Endothelial cell of umbilical vein (primary cell): ENCODE measurements at regions of chr11 and their contacts with region 1.

Region 1: GRCh38 chr11:124837491-124837856 is 27.8 kb upstream of the ROBO3 start:
- DNase-seq: peak; percentile 87
- H3K4me3 ChIP-seq: no peak overlapping the region
- H3K27ac ChIP-seq: no peak overlapping the region
- H3K4me1 ChIP-seq: peaks cover 10% of the 10 kb centered on the region
- H3K27me3 ChIP-seq: peaks cover 37 to 53% of the 10 kb centered on the region in 2 experiments
- CTCF ChIP-seq: peak; percentile 55 to 69
- POLR2A ChIP-seq: no peak

Region 2: DNA sequence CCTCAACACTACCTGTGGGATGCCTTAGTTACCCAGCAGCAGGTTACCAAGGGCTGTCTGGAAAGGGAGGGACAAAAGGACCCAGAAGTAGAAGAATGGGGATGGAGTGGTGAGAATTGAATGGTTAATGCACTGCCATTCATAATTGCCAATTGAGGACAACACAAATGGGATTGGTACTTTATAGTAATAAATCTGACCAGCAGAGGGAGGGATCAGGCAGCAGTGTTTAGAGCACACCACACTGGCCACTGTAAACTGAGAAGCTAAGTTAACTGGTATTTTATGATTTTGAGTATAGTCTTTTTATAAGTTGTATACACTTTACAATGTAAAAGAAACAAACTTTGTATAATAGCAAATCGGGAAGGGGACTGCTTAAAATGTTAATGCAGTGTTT is 204.1 kb before region 1 on chr11:
- CTCF ChIA-PET with region 1: interaction called, 17 read pairs
- POLR2A ChIA-PET with region 1: no interaction called
- dilution Hi-C with region 1: no loop called
- intact Hi-C with region 1: no loop called
- DNase-seq: peak; percentile 26
- H3K4me3 ChIP-seq: no peak overlapping the region
- H3K27ac ChIP-seq: no peak overlapping the region
- H3K4me1 ChIP-seq: no peaks in the 10 kb centered on the region
- H3K27me3 ChIP-seq: no peaks in the 10 kb centered on the region
- CTCF ChIP-seq: peak; percentile 26 to 36
- POLR2A ChIP-seq: no peak

Region 3: GRCh38 chr11:124673333-124674167 is 163.9 kb before region 1 on chr11 and contains the starts of genes SIAE and SPA17:
- CTCF ChIA-PET with region 1: interaction called, 105 read pairs
- POLR2A ChIA-PET with region 1: interaction called, 5 read pairs
- dilution Hi-C with region 1: loop called (anchors 10 kb)
- intact Hi-C with region 1: loop called (anchors 1 kb)
- DNase-seq: peak; percentile 97
- H3K4me3 ChIP-seq: peak within 1 kb of the TSS; percentile 65 to 95 (median 65)
- H3K27ac ChIP-seq: peak within 1 kb of the TSS; percentile 63
- H3K4me1 ChIP-seq: peaks cover 26% of the 10 kb centered on the region
- H3K27me3 ChIP-seq: no peaks in the 10 kb centered on the region
- CTCF ChIP-seq: no peak
- POLR2A ChIP-seq: peak; percentile 96
- total RNA-seq, gene SIAE: 15.1 and 16.9 TPM in 2 replicates
- total RNA-seq, gene SPA17: 4.7 and 6.1 TPM in 2 replicates

Region 4: GRCh38 chr11:124753205-124753604 is 84.3 kb before region 1 on chr11:
- CTCF ChIA-PET with region 1: interaction called, 33 read pairs
- POLR2A ChIA-PET with region 1: interaction called, 3 read pairs
- dilution Hi-C with region 1: no loop called
- intact Hi-C with region 1: no loop called
- DNase-seq: no peak
- H3K4me3 ChIP-seq: no peak overlapping the region
- H3K27ac ChIP-seq: peak overlapping the region; percentile 28
- H3K4me1 ChIP-seq: peaks cover 77% of the 10 kb centered on the region
- H3K27me3 ChIP-seq: no peaks in the 10 kb centered on the region
- CTCF ChIP-seq: no peak
- POLR2A ChIP-seq: no peak

Region 5: DNA sequence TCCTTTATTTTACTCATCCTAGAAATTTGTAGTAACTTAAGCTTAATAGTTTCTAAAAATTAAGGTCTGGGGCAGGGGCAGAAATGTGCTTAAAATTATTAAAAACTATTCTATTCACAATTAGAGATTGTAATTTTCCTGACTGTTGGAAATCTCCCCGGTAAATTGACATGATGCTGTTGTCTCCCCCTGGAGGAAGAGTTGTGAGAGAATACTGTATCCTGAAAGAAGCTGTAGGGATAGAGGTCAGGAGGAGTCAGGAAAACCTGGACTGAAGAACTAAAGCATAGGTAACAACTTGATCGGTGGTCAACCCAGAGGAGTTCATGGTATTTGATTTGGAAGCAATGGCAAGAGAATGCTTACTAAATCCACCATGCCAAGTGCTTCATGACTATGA is 59.2 kb before region 1 on chr11:
- CTCF ChIA-PET with region 1: interaction called, 27 read pairs
- POLR2A ChIA-PET with region 1: no interaction called
- dilution Hi-C with region 1: no loop called
- intact Hi-C with region 1: no loop called
- DNase-seq: no peak
- H3K4me3 ChIP-seq: no peak overlapping the region
- H3K27ac ChIP-seq: no peak overlapping the region
- H3K4me1 ChIP-seq: no peaks in the 10 kb centered on the region
- H3K27me3 ChIP-seq: no peaks in the 10 kb centered on the region
- CTCF ChIP-seq: peak in 1 of 2 donors; percentile 26
- POLR2A ChIP-seq: no peak

Region 6: GRCh38 chr11:124855437-124855836 is 18.0 kb after region 1 on chr11:
- CTCF ChIA-PET with region 1: interaction called, 16 read pairs
- POLR2A ChIA-PET with region 1: no interaction called
- dilution Hi-C with region 1: no loop called
- intact Hi-C with region 1: no loop called
- DNase-seq: no peak
- H3K4me3 ChIP-seq: no peak overlapping the region
- H3K27ac ChIP-seq: no peak overlapping the region
- H3K4me1 ChIP-seq: no peaks in the 10 kb centered on the region
- H3K27me3 ChIP-seq: peaks cover 31 to 69% of the 10 kb centered on the region in 2 experiments
- CTCF ChIP-seq: no peak
- POLR2A ChIP-seq: no peak

Region 7: DNA sequence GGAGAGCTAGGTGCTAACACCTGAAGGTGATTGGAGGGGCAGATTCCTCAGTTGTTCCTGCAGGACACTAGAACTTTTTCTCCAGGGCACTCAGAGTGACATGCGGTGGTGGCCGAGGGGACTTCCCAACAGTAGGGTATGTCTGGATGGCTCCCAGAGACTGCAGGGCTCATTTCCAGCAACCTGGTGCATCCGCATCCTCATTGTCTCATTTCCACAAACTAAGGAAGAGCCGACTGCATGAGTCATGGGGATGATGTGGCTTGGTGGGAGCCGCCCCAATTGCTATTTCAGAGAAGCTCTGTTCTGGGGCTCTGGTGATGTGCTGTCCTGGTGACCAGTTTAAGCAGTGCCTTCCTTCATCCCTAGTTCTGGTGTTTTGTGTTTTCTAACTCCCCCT is 63.0 kb after region 1 on chr11:
- CTCF ChIA-PET with region 1: no interaction called
- POLR2A ChIA-PET with region 1: no interaction called
- dilution Hi-C with region 1: no loop called
- intact Hi-C with region 1: loop called (anchors 2 kb)
- DNase-seq: peak; percentile 75
- H3K4me3 ChIP-seq: peak overlapping the region in 1 of 3 experiments; percentile 41
- H3K27ac ChIP-seq: peak overlapping the region; percentile 95
- H3K4me1 ChIP-seq: peaks cover 51% of the 10 kb centered on the region
- H3K27me3 ChIP-seq: no peaks in the 10 kb centered on the region
- CTCF ChIP-seq: no peak
- POLR2A ChIP-seq: peak; percentile 67